CD4-positive, alpha-beta memory T cell (primary cell): ENCODE measurements at regions of chr14 and their contacts with region 1.

Region 1: GRCh38 chr14:72516936-72517700 is 376.8 kb downstream of the DPF3 start:
- DNase-seq: peak; percentile 70 to 76 (median 75)
- H3K4me3 ChIP-seq: no peak overlapping the region
- H3K4me3 Mint-ChIP-seq: peak overlapping the region in 5 of 8 donors; percentile 2 to 78 (median 33)
- H3K27ac ChIP-seq: no peak overlapping the region
- H3K27ac Mint-ChIP-seq: peak overlapping the region in 3 of 7 donors; percentile 42 to 65 (median 51)
- H3K4me1 ChIP-seq: peaks cover 34% of the 10 kb centered on the region
- H3K4me1 Mint-ChIP-seq: peaks cover 31 to 55% (median 39%) of the 10 kb centered on the region in 4 donors
- H3K27me3 ChIP-seq: no peaks in the 10 kb centered on the region
- H3K27me3 Mint-ChIP-seq: no peaks in the 10 kb centered on the region

Region 2: GRCh38 chr14:72318648-72319047 is 198.5 kb before region 1 on chr14:
- CTCF ChIA-PET with region 1: no interaction called
- POLR2A ChIA-PET with region 1: no interaction called
- intact Hi-C with region 1: no loop called
- DNase-seq: no peak
- H3K4me3 ChIP-seq: no peak overlapping the region
- H3K4me3 Mint-ChIP-seq: no peak overlapping the region
- H3K27ac ChIP-seq: no peak overlapping the region
- H3K27ac Mint-ChIP-seq: no peak overlapping the region
- H3K4me1 ChIP-seq: no peaks in the 10 kb centered on the region
- H3K4me1 Mint-ChIP-seq: no peaks in the 10 kb centered on the region
- H3K27me3 ChIP-seq: peaks cover 3% of the 10 kb centered on the region
- H3K27me3 Mint-ChIP-seq: peaks cover 13 to 17% of the 10 kb centered on the region in 2 donors

Region 3: GRCh38 chr14:72528059-72528862 is 11.1 kb after region 1 on chr14:
- CTCF ChIA-PET with region 1: interaction called, 15 read pairs
- POLR2A ChIA-PET with region 1: no interaction called
- intact Hi-C with region 1: no loop called
- DNase-seq: no peak
- H3K4me3 ChIP-seq: no peak overlapping the region
- H3K4me3 Mint-ChIP-seq: peak overlapping the region in 1 of 8 donors; percentile 6
- H3K27ac ChIP-seq: no peak overlapping the region
- H3K27ac Mint-ChIP-seq: no peak overlapping the region
- H3K4me1 ChIP-seq: peaks cover 48% of the 10 kb centered on the region
- H3K4me1 Mint-ChIP-seq: peaks cover 23 to 61% (median 41%) of the 10 kb centered on the region in 4 donors
- H3K27me3 ChIP-seq: no peaks in the 10 kb centered on the region
- H3K27me3 Mint-ChIP-seq: no peaks in the 10 kb centered on the region

Region 4: GRCh38 chr14:72638021-72638420 is 120.9 kb after region 1 on chr14:
- CTCF ChIA-PET with region 1: no interaction called
- POLR2A ChIA-PET with region 1: no interaction called
- intact Hi-C with region 1: no loop called
- DNase-seq: no peak
- H3K4me3 ChIP-seq: no peak overlapping the region
- H3K4me3 Mint-ChIP-seq: no peak overlapping the region
- H3K27ac ChIP-seq: no peak overlapping the region
- H3K27ac Mint-ChIP-seq: no peak overlapping the region
- H3K4me1 ChIP-seq: no peaks in the 10 kb centered on the region
- H3K4me1 Mint-ChIP-seq: peaks cover 0 to 13% (median 2%) of the 10 kb centered on the region in 4 donors
- H3K27me3 ChIP-seq: no peaks in the 10 kb centered on the region
- H3K27me3 Mint-ChIP-seq: peaks cover 0 to 4% of the 10 kb centered on the region in 2 donors

Region 5: DNA sequence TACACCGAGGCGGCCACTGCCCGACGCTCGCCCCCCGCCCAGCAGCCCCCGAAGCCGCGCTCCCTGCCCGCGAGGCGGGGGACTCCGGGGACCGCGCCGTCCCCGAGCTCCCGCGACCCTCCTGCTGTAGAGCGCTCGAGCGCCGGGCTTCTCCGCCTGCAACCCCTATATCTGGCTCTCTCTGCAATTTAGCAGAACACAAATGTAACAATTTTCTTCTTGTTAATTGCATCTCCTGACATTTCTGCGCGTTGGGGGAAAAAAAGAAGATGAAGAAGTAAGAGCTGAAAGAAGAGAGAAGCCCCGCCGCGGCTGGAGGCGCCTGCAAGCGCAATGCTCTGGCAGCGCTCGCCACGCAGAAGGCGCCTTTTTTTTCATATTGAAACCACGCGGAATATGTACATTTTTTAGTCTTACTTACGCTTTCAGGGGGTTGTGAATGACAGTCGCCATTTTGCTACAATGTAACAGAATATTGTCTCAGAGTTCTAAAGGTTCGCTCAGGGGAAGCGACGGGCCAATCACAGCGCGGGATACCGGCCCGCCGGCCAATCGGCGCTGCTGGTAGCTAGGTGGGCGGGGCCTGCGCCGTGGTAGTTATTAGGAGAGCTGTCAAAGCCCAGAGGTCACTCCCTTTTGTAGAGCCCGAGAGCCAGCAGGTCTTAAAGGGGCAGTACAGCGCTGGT is 376.7 kb after region 1 on chr14 and contains the start of gene DPF3:
- CTCF ChIA-PET with region 1: interaction called, 15 read pairs
- POLR2A ChIA-PET with region 1: interaction called, 6 read pairs
- intact Hi-C with region 1: no loop called
- DNase-seq: peak; percentile 88 to 93 (median 89)
- H3K4me3 ChIP-seq: peak within 1 kb of the TSS; percentile 78 to 79
- H3K4me3 Mint-ChIP-seq: peak within 1 kb of the TSS; percentile 94 to 99 (median 96)
- H3K27ac ChIP-seq: peak within 1 kb of the TSS; percentile 33
- H3K27ac Mint-ChIP-seq: peak within 1 kb of the TSS; percentile 79 to 91 (median 87)
- H3K4me1 ChIP-seq: peaks cover 27% of the 10 kb centered on the region
- H3K4me1 Mint-ChIP-seq: peaks cover 12 to 29% (median 22%) of the 10 kb centered on the region in 4 donors
- H3K27me3 ChIP-seq: peaks cover 9% of the 10 kb centered on the region
- H3K27me3 Mint-ChIP-seq: peaks cover 26 to 39% of the 10 kb centered on the region in 2 donors
- total RNA-seq, gene DPF3: 0.35 TPM in 1 of 2 experiments, not detected in the other

Region 6: DNA sequence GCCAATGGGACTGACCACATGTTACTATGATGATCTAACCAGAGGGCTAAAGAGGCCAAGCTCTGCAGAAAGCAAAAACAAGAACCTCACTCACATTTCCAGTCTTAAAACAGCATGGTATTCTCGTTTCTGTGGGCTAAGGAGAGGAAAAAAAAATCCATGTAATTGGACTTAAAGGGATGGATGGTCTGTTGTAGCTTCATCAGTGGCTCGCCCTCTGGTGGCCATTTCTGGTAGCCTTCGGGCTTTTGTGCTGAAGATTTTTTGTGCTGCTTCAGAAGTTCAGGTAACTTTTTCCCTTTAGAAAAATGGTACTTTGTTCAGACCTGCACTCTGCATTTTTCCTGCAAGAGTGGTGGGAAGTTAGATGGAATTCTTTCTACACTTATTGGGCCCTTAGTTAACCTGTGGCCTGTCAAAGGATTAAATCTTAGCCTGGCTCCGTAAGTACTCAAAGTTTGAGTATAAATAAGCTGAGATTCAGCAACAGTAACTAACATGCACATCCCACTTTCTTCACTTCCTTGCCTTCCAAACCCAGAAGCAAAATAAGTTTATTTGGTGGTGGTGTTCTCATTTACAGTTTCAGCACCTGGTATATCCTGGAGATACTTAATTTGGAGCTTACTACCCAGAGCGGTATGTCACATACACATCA is 431.5 kb after region 1 on chr14:
- CTCF ChIA-PET with region 1: interaction called, 66 read pairs
- POLR2A ChIA-PET with region 1: interaction called, 3 read pairs
- intact Hi-C with region 1: loop called (anchors 1 kb)
- DNase-seq: peak in 4 of 5 donors; percentile 35 to 51 (median 40)
- H3K4me3 ChIP-seq: no peak overlapping the region
- H3K4me3 Mint-ChIP-seq: no peak overlapping the region
- H3K27ac ChIP-seq: no peak overlapping the region
- H3K27ac Mint-ChIP-seq: peak overlapping the region in 1 of 7 donors; percentile 73
- H3K4me1 ChIP-seq: no peaks in the 10 kb centered on the region
- H3K4me1 Mint-ChIP-seq: peaks cover 0 to 4% (median 2%) of the 10 kb centered on the region in 4 donors
- H3K27me3 ChIP-seq: no peaks in the 10 kb centered on the region
- H3K27me3 Mint-ChIP-seq: no peaks in the 10 kb centered on the region